ENCODE measurements at regions of chr17 and their contacts with region 1.

Region 1: DNA sequence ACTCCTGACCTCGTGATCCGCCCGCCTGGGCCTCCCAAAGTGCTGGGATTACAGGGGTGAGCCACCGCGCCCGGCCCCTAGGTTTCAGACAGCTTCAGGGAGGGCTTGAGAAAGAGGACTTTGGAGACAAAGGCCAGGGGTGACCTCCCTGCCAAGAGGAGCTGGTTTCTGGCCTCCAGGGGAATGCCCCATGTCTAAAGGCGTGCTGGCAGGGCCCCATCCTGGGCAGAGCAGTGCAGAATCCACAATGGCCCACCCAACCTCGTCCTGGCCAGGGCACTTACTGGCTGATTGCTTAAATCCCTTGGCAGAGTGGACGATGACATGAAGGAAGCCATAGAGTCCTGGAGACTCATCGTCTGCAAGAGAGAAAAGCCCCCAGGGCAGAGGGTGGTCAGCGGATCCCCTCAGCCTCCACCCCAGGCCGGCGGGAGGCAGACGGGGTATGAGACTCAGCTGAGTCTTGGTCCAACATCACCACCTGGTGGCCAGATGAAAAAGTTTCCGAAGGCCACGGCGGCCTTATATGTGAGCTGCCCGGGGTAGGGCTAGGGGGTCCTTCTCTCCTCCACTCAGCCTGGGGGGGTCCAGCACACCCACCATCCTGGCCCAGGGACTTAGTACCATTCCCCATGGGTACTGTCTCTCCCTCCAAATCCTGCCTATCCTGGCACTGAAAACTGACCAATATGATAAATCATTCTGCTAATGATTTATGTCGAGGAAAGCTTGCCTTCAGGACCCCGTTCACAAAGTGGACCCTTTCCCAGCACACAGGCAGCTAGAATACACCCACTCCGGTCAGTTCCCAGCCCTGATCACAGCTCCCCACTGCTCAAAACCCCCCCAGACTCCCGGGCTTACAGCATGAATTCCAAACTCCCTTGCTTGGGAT is 59.1 kb downstream of the TIMM22 start:
- DNase-seq: no peak
- H3K4me3 ChIP-seq: no peak overlapping the region
- H3K27me3 ChIP-seq: no peaks in the 10 kb centered on the region
- CTCF ChIP-seq: peak; percentile 74

Region 2: DNA sequence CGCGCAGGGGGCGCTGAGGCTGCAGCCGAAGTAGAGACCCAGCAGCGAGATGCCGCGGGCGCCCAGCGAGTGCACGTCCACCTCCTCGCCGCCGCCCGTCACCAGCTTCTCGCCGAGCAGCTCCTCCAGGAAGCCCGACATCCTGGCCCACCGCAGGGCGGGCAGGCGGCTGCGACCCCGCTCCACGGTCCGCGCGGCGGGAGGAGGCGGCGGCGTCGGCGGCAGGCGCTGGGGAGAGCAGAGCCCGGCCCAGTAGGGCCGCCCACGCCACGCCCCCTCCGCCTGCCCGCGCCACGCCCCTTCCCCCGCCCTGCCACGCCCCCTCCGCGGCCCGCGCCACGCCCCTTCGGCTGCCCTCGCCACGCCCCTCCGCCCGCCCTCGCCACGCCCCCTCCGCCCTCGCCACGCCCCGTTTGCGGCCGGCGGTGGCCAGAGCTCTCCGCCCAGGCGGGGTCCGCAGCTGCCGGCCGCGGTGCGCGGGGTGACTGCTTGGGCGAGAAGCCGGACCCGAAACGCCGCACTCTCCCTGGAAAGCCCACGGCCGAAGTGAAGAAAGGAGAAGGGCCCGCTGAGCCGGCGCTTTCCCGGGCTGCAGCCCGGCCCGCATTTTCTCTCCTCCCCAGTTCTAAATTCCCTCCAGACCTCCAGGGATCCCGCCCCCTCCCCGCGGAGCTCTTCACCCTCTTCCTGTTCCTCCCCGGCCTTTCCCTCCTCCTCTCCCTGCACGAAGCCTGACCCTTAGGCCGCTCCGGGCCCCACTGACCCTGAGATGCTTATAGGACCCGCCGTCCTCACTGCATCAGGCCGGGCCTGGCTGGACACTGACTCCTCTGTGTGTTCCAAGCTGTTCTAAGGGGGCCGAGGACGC is 76.2 kb before region 1 on chr17 and contains the start of gene NXN:
- CTCF ChIA-PET with region 1: interaction called, 26 read pairs
- POLR2A ChIA-PET with region 1: no interaction called
- DNase-seq: no peak
- H3K4me3 ChIP-seq: peak within 1 kb of the TSS; percentile 91
- H3K27me3 ChIP-seq: no peaks in the 10 kb centered on the region
- CTCF ChIP-seq: peak; percentile 27
- polyA plus RNA-seq, gene NXN: 65.3 and 88.8 TPM in 2 replicates

Region 3: DNA sequence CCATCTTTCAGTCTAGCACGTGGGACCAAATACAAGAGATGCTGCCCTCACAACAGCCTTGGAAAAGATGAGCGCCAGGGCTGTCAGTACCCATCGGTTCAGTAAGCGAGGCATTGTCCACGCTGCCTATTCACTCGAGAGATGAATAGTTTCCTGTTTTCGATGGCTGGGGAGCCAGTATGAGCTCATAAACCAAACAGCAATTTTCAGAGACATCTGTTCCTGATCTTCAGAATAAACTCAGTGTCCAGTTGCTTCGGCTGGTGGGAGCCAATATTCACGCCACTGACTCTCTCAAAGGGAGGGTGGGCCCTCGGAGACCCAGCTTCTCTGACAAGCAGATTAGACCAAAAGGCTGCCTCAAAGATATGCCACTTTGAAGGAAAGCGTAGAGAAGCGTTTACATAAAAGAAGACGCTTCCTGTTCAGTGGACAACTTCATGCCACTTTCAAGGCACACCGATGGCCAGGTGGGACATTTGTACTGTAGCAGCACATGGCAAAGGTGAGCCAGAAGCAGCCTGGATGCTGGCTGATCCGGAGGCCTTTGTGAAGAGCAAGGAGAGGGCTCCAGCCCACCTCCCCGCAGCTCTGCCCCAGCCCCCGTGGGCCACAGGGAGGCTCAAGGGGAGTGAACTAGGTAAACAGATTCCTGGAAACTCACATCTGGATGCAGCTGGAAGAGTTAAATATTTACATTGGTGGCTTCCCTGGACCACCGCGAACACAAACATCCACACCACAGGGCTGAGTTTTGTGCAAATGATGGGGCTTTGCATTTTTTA is 53.0 kb before region 1 on chr17:
- CTCF ChIA-PET with region 1: interaction called, 54 read pairs
- POLR2A ChIA-PET with region 1: no interaction called
- DNase-seq: peak; percentile 36
- H3K4me3 ChIP-seq: no peak overlapping the region
- H3K27me3 ChIP-seq: no peaks in the 10 kb centered on the region
- CTCF ChIP-seq: no peak

Region 4: GRCh38 chr17:1035546-1036170 is 20.3 kb before region 1 on chr17:
- CTCF ChIA-PET with region 1: interaction called, 21 read pairs
- POLR2A ChIA-PET with region 1: no interaction called
- DNase-seq: no peak
- H3K4me3 ChIP-seq: no peak overlapping the region
- H3K27me3 ChIP-seq: no peaks in the 10 kb centered on the region
- CTCF ChIP-seq: no peak

Region 5: DNA sequence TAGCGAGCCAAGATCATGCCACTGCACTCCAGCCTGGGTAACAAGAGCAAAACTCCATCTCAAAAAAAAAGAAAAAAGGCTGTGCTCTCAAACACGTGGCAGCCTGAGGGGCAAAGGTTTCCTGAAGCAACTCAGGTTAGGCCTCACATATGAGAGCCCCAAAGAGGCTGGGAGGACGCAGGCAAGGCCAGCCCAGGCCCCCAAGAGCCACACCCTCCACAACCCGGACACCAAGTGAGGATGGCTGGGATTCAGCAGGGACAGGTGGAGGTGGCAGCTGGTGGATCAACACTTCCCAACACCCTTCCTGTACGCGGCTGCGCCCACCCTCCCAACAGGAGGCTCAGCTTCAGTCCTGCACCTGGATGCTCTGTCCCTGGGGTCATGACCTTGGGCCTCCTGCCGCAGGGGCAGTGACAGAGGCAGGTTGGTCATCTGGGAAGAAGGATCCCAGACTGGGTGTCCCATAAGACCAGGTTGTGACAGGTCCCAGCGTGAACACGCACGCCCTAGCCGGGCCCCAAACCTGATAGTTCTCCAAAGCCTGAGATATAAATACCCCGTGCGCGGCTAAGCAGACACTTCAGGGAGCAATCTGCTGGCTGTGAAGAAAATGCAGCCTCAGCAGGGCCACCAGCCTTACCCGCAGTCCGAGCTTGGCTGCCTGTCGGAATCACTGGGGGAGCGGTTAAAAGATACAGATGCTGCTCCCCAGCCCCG is 19.0 kb after region 1 on chr17:
- CTCF ChIA-PET with region 1: interaction called, 12 read pairs
- POLR2A ChIA-PET with region 1: interaction called, 5 read pairs
- DNase-seq: no peak
- H3K4me3 ChIP-seq: no peak overlapping the region
- H3K27me3 ChIP-seq: no peaks in the 10 kb centered on the region
- CTCF ChIP-seq: no peak

Measured in BJ (cell line).